Sciatic nerve (tissue), 2 donors: ENCODE measurements at regions of chr4 and their contacts with region 1.

Region 1: GRCh38 chr4:2755837-2756694 is at the start of gene TNIP2:
- DNase-seq: peak; percentile 92
- ATAC-seq: peak; percentile 95
- total RNA-seq, gene TNIP2: 34.9 TPM

Region 2: DNA sequence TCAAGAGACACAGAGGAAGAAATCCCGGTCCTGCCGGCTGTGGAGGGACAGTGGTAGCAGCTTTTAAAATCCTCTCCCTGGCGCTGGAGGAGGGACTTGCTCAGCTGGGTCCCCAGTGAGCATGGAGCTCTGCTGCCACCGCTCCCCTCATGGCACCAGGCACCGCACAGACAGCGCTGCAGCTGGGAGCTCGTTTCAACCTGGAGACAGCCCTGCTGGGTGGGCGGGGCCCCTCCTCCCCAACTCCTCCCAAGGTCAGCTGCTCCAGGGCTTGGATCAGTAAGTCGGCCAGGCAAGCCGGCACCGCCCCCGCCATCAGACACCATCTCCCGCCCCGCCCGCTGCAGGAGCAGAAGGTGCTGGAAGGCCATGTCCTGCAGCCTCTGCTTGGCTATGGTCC is 354.0 kb before region 1 on chr4:
- intact Hi-C with region 1: no loop called
- DNase-seq: peak; percentile 69
- ATAC-seq: peak; percentile 67

Region 3: GRCh38 chr4:2570551-2571222 is 185.4 kb before region 1 on chr4:
- intact Hi-C with region 1: no loop called
- DNase-seq: no peak
- ATAC-seq: peak; percentile 38

Region 4: GRCh38 chr4:2667428-2667827 is 88.6 kb before region 1 on chr4:
- intact Hi-C with region 1: loop called (anchors 2 kb)
- DNase-seq: no peak
- ATAC-seq: no peak

Region 5: DNA sequence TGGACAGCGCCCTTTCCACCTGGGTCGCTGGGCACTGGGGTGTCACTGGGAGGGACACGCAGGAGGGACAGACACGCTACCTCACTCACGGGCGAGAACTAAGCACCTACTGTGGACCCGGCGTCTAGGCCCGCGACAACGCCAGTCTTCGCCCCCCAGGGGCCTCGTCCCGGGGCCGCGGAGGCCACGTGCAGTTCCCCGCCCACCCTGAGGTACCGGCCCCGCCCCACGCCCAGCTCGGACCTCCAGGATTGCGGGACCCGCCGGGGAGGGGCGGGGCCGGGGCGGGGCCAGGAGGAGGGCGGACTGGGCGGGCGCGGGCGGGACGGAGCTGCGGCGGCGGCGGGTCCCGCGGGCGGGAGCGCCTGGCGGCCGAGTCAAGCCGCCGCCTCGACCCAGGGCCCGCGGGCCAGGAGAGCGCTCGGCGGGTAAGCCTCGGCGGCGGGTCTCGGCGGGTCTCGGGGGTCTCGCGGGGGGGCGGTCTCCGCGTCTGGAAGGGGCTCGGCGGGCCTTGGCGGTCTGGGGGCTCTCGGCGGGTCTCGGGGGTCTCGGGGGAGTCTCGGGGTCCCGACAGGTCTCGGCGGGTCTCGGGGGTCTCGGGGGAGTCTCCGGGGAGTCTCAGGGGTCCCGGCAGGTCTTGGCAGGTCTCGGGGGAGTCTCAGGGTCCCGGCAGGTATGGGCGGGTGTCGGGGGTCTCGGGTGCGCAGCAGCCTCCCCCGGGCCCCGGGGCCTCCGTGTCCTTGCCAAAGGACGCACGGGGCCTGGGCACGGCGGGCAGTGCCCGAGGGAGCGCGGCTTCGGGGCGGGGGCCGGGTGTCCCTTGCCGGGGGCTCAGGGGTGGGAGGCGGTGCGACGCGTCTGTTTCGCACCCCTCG is 36.9 kb after region 1 on chr4 and contains the start of gene SH3BP2:
- intact Hi-C with region 1: no loop called
- DNase-seq: peak; percentile 91
- ATAC-seq: peak; percentile 67
- total RNA-seq, gene SH3BP2: 82.7 TPM

Region 6: GRCh38 chr4:2934813-2935761 is 179.0 kb after region 1 on chr4:
- intact Hi-C with region 1: loop called (anchors 10 kb)
- DNase-seq: peak; percentile 99
- ATAC-seq: peak; percentile 88